ENCODE measurements at regions of chr9 and their contacts with region 1.

Region 1: GRCh38 chr9:14768405-14769229 is 46.1 kb upstream of the CER1 start:
- DNase-seq: no peak
- ATAC-seq: peak in 6 of 8 donors; percentile 15 to 56 (median 34)
- H3K4me3 ChIP-seq: no peak overlapping the region
- H3K27ac ChIP-seq: no peak overlapping the region
- H3K4me1 ChIP-seq: peaks cover 0 to 8% (median 0%) of the 10 kb centered on the region in 9 donors
- H3K27me3 ChIP-seq: peaks cover 0 to 5% (median 0%) of the 10 kb centered on the region in 7 donors
- CTCF ChIP-seq: peak; percentile 52 to 79 (median 76)

Region 2: GRCh38 chr9:13033959-13034693 is 1734.5 kb before region 1 on chr9:
- intact Hi-C with region 1: loop called in 2 of 10 experiments (anchors 10 kb)
- DNase-seq: peak; percentile 48 to 55
- ATAC-seq: peak; percentile 82 to 91 (median 86)
- H3K4me3 ChIP-seq: peak overlapping the region in 8 of 10 donors; percentile 10 to 38 (median 35)
- H3K27ac ChIP-seq: no peak overlapping the region
- H3K4me1 ChIP-seq: peaks cover 0 to 9% (median 0%) of the 10 kb centered on the region in 9 donors
- H3K27me3 ChIP-seq: no peaks in the 10 kb centered on the region
- CTCF ChIP-seq: peak; percentile 59 to 81 (median 77)

Region 3: DNA sequence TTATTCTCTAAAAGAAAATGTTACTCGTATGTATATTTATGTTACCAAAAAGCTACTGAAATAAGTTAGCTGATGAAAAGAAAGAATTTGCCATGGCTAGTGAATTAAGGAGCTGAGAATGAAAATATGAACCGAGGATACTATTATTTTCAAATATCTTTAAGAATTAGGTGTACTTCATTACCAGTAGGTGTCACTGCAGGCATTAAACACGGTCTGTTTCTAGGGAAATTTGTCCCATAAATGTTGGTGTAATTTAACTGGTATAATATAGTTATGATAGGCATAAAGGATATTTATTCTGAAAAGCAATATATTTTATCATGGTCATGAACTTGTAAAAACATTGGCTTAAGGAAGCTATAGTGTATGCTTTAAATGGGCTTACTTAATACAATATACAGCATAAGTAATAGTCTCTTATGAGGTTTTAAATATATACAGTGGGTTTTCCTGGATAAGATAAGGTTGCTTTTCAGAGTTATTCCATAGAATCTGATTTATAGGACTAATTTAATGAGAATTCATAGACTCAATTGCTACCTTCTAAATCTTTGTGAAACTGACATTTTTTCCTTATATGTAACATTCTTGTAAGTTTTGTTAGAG is 1416.7 kb before region 1 on chr9:
- intact Hi-C with region 1: loop called in 2 of 10 experiments (anchors 5 to 10 kb)
- DNase-seq: peak in 1 of 2 donors; percentile 40
- ATAC-seq: peak in 2 of 8 donors; percentile 31 to 55
- H3K4me3 ChIP-seq: no peak overlapping the region
- H3K27ac ChIP-seq: no peak overlapping the region
- H3K4me1 ChIP-seq: no peaks in the 10 kb centered on the region
- H3K27me3 ChIP-seq: no peaks in the 10 kb centered on the region
- CTCF ChIP-seq: peak; percentile 54 to 84 (median 68)

Region 4: GRCh38 chr9:14466429-14466818 is 302.2 kb before region 1 on chr9:
- intact Hi-C with region 1: loop called in 3 of 10 experiments (anchors 5 to 10 kb)
- DNase-seq: no peak
- ATAC-seq: no peak
- H3K4me3 ChIP-seq: no peak overlapping the region
- H3K27ac ChIP-seq: no peak overlapping the region
- H3K4me1 ChIP-seq: no peaks in the 10 kb centered on the region
- H3K27me3 ChIP-seq: no peaks in the 10 kb centered on the region
- CTCF ChIP-seq: no peak

Region 5: GRCh38 chr9:14616188-14616982 is 152.2 kb before region 1 on chr9:
- intact Hi-C with region 1: loop called (anchors 2 to 10 kb)
- DNase-seq: no peak
- ATAC-seq: peak in 1 of 8 donors; percentile 37
- H3K4me3 ChIP-seq: no peak overlapping the region
- H3K27ac ChIP-seq: no peak overlapping the region
- H3K4me1 ChIP-seq: no peaks in the 10 kb centered on the region
- H3K27me3 ChIP-seq: no peaks in the 10 kb centered on the region
- CTCF ChIP-seq: peak; percentile 30 to 79 (median 70)

Region 6: DNA sequence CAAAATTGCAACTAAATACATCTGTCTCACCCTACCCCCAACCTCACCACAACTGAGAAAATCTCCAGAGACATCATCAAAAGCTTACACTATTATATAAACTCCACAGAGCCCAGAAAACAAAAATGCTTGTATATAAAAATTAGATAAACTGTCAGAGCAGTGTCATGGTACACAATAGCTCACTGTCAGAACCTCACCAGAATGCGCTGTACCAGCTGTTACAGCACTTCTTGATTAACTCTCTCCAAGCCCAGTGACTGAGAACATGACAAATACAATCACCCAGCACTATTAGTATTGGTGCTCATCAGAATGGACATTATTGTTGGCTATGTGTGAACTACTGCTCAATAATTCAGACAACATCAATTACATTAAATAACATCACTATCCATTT is 141.1 kb before region 1 on chr9:
- intact Hi-C with region 1: loop called in 1 of 10 experiments (anchors 10 kb)
- DNase-seq: no peak
- ATAC-seq: peak in 1 of 8 donors; percentile 24
- H3K4me3 ChIP-seq: no peak overlapping the region
- H3K27ac ChIP-seq: no peak overlapping the region
- H3K4me1 ChIP-seq: peaks cover 0 to 7% (median 0%) of the 10 kb centered on the region in 9 donors
- H3K27me3 ChIP-seq: no peaks in the 10 kb centered on the region
- CTCF ChIP-seq: no peak

Region 7: DNA sequence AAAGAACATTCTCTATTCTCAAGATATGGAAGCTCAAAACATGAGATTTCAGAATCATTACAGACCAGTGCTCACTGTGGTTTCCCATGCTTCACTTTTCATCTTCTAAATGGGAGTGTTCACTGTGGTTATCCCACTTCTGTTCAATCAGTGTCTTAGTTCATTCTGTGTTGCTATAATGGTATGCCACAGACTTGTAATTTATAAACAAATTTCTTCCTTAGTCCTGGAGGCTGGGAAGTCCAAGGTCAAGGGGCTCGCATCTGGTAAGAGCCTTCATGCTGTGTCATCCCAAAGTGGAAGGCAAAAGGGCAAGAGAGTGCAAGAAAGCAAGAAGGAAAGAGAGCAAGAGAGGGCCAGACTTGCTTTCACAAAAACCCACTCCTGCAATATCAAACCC is 392.1 kb after region 1 on chr9:
- intact Hi-C with region 1: no loop called
- DNase-seq: no peak
- ATAC-seq: no peak
- H3K4me3 ChIP-seq: no peak overlapping the region
- H3K27ac ChIP-seq: no peak overlapping the region
- H3K4me1 ChIP-seq: peaks cover 3 to 25% (median 20%) of the 10 kb centered on the region in 9 donors
- H3K27me3 ChIP-seq: no peaks in the 10 kb centered on the region
- CTCF ChIP-seq: no peak

Region 8: DNA sequence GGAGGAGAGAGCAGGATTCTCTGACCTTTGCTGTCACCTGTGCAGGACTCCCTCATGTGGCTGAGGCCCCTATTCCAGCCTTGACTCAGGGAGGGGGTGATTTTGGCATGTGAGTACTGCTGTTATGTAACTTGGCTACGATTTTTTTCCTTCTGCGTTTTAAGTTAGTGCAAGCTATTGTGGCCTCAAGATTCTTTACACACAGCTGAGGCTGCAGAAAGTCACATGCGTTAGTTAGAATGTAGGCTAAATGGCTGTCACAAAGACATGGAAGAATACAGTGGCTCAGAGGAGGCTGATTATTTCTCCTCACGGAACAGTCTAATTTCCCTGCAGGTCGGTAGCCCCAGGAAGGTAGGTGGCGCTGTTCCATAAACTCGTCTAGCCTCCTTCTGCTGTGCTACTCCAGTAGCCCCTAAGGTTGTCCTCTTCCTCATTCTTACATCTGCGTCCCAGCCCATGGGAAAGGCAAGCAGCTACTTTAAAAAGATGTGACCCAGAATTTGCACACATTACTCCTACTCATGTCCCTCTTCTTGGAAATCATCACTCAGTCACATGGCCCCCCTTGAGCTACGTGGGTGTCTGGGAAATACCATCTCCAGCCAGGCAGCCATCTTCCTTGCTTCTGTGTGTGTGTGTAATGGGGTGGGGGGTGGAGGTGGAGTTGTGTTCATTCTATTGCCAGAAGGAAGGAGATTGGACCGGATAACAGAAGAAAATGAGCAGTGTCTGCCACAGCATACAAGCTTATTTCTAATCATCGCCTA is 1270.8 kb after region 1 on chr9:
- intact Hi-C with region 1: no loop called
- DNase-seq: peak in 1 of 2 donors; percentile 35
- ATAC-seq: peak in 6 of 8 donors; percentile 24 to 74 (median 58)
- H3K4me3 ChIP-seq: no peak overlapping the region
- H3K27ac ChIP-seq: peak overlapping the region in 1 of 10 donors; percentile 10
- H3K4me1 ChIP-seq: peaks cover 0 to 13% (median 0%) of the 10 kb centered on the region in 9 donors
- H3K27me3 ChIP-seq: no peaks in the 10 kb centered on the region
- CTCF ChIP-seq: peak in 5 of 9 donors; percentile 23 to 52 (median 37)